Activated CD4-positive, alpha-beta T cell treated with anti-CD3 and anti-CD28 coated beads for 36 hours (primary cell): ENCODE measurements at regions of chr7 and their contacts with region 1.

Region 1: DNA sequence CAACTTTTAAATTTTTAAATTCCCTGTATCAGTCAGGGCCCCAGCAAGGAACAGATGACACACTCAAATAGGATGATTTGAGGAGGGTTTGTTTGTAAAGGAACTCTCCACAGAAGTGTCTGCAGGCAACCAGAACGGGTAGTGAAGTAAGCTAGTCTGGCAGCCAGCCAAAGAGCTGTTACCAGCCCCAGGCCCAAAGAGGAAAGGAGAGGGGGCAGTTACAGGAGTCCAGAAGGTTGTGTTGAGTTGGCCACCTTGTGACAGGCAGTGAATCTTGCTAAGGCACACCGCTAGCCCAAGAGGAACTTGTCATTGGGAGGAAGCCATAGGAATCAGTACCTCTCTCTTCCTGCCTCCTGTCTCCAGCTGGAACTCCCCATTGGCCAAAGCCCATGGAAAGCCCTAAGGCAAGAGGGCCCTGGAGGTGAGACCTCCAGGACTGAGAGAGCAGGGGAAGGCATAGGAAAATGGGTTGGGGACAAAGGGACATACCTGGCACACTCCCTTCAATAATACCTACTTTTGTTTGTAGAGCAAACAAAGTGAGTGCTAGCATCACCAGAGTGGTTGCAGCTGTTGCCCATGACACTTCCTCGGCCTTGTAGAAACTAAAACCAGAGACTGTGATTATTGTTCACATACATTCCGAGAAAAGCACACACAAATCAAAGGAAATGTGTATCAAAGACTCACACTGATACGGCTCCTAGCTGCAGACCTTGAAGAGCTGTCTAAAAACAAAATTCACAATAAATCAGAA is 25.4 kb upstream of the GATAD1 start:
- DNase-seq: no peak
- ATAC-seq: no peak
- H3K4me3 Mint-ChIP-seq: no peak overlapping the region
- H3K27ac Mint-ChIP-seq: no peak overlapping the region
- H3K4me1 Mint-ChIP-seq: peaks cover 10% of the 10 kb centered on the region
- H3K27me3 Mint-ChIP-seq: peaks cover 18% of the 10 kb centered on the region

Region 2: GRCh38 chr7:92432355-92432870 is 10.6 kb after region 1 on chr7:
- CTCF ChIA-PET with region 1: interaction called, 10 read pairs
- POLR2A ChIA-PET with region 1: no interaction called
- intact Hi-C with region 1: no loop called
- DNase-seq: no peak
- ATAC-seq: no peak
- H3K4me3 Mint-ChIP-seq: no peak overlapping the region
- H3K27ac Mint-ChIP-seq: no peak overlapping the region
- H3K4me1 Mint-ChIP-seq: no peaks in the 10 kb centered on the region
- H3K27me3 Mint-ChIP-seq: peaks cover under 1% of the 10 kb centered on the region

Region 3: GRCh38 chr7:92461027-92462003 is 39.5 kb after region 1 on chr7:
- CTCF ChIA-PET with region 1: interaction called, 20 read pairs
- POLR2A ChIA-PET with region 1: no interaction called
- intact Hi-C with region 1: loop called (anchors 1 kb)
- DNase-seq: peak; percentile 56
- ATAC-seq: peak; percentile 74
- H3K4me3 Mint-ChIP-seq: no peak overlapping the region
- H3K27ac Mint-ChIP-seq: no peak overlapping the region
- H3K4me1 Mint-ChIP-seq: no peaks in the 10 kb centered on the region
- H3K27me3 Mint-ChIP-seq: no peaks in the 10 kb centered on the region

Region 4: GRCh38 chr7:92916674-92917224 is 494.9 kb after region 1 on chr7:
- CTCF ChIA-PET with region 1: no interaction called
- POLR2A ChIA-PET with region 1: no interaction called
- intact Hi-C with region 1: no loop called
- DNase-seq: no peak
- ATAC-seq: no peak
- H3K4me3 Mint-ChIP-seq: no peak overlapping the region
- H3K27ac Mint-ChIP-seq: no peak overlapping the region
- H3K4me1 Mint-ChIP-seq: peaks cover 2% of the 10 kb centered on the region
- H3K27me3 Mint-ChIP-seq: peaks cover 7% of the 10 kb centered on the region